Left ventricle myocardium inferior (tissue), 1 donor: ENCODE measurements at regions of chr2 and their contacts with region 1.

Region 1: DNA sequence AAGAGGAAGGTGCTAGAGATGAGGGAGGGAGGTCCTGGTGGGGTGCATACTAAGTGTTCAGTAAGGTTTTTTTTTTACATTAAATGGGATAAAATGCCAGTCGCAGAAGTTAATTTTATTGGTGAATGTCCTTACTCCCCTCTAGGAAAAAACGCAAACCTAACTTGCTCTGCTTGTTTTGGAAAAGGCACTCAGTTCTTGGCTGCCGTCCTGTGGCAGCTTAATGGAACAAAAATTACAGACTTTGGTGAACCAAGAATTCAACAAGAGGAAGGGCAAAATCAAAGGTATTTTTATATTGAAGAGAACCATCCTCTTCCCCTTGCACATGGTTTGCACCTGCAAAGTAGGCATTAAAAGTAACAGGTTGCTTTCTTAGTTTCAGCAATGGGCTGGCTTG is 12.7 kb upstream of the IL18R1 start:
- DNase-seq: no peak
- H3K4me3 ChIP-seq: no peak overlapping the region
- H3K27ac ChIP-seq: no peak overlapping the region
- H3K4me1 ChIP-seq: no peaks in the 10 kb centered on the region
- H3K27me3 ChIP-seq: peaks cover 10% of the 10 kb centered on the region
- CTCF ChIP-seq: peak; percentile 25

Region 2: DNA sequence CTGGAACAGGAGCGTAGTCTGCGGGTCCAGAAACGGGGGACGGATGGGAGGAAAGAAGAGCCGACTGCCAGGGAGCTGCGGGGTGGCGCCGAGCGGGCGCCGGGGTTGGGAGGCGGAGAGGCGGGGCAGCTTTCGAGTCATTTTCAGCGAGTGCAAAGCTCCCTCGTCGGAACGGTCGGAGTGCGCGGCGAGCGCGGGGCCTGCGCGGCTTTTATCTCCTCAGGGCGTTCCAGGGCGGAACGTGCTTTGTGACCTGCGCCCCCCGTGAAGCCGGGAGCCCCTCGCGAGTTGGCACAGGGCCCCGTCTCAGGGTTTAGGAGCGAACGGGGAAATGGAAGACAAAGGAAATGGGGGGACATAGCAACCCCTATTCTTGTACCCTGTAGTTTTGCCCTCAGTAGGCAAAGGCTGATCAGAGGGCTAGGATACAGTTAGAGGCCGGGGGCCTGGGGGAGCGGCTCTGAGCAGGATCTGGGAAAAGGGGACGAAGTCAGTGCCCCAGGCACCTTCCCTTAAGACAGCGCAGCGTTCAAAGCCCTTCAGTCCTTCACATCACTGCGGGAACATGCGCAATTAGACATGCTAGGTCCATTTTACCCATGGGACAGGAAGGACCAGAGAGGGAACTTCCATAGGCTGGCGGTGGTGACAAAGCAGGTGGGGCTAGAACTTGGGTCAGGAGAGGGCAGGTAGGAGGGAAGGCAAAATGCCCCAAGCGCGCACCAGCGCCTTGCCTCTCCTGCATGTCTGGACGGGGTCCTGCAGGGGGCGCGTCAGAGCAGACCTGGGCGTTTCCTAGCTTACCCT is 91.6 kb before region 1 on chr2:
- intact Hi-C with region 1: loop called (anchors 10 kb)
- DNase-seq: peak; percentile 52
- H3K4me3 ChIP-seq: peak overlapping the region; percentile 63
- H3K27ac ChIP-seq: peak overlapping the region; percentile 43
- H3K4me1 ChIP-seq: peaks cover 18% of the 10 kb centered on the region
- H3K27me3 ChIP-seq: peaks cover 32% of the 10 kb centered on the region
- CTCF ChIP-seq: peak; percentile 76